H1 (cell line): ENCODE measurements at regions of chr6 and their contacts with region 1.

Region 1: GRCh38 chr6:158686791-158687381 is 37.0 kb downstream of the SYTL3 start:
- DNase-seq: no peak
- H3K4me3 ChIP-seq: no peak overlapping the region
- H3K27ac ChIP-seq: no peak overlapping the region
- H3K4me1 ChIP-seq: no peaks in the 10 kb centered on the region
- H3K27me3 ChIP-seq: no peaks in the 10 kb centered on the region
- CTCF ChIP-seq: no peak
- EP300 ChIP-seq: no peak
- POLR2A ChIP-seq: no peak
- RAD21 ChIP-seq: no peak

Region 2: GRCh38 chr6:158213925-158214674 is 472.8 kb before region 1 on chr6:
- CTCF ChIA-PET with region 1: interaction called, 10 read pairs
- POLR2A ChIA-PET with region 1: no interaction called
- DNase-seq: no peak
- H3K4me3 ChIP-seq: no peak overlapping the region
- H3K27ac ChIP-seq: no peak overlapping the region
- H3K4me1 ChIP-seq: no peaks in the 10 kb centered on the region
- H3K27me3 ChIP-seq: no peaks in the 10 kb centered on the region
- CTCF ChIP-seq: peak; percentile 38 to 86 (median 79)
- EP300 ChIP-seq: no peak
- POLR2A ChIP-seq: no peak
- RAD21 ChIP-seq: peak; percentile 93 to 94

Region 3: DNA sequence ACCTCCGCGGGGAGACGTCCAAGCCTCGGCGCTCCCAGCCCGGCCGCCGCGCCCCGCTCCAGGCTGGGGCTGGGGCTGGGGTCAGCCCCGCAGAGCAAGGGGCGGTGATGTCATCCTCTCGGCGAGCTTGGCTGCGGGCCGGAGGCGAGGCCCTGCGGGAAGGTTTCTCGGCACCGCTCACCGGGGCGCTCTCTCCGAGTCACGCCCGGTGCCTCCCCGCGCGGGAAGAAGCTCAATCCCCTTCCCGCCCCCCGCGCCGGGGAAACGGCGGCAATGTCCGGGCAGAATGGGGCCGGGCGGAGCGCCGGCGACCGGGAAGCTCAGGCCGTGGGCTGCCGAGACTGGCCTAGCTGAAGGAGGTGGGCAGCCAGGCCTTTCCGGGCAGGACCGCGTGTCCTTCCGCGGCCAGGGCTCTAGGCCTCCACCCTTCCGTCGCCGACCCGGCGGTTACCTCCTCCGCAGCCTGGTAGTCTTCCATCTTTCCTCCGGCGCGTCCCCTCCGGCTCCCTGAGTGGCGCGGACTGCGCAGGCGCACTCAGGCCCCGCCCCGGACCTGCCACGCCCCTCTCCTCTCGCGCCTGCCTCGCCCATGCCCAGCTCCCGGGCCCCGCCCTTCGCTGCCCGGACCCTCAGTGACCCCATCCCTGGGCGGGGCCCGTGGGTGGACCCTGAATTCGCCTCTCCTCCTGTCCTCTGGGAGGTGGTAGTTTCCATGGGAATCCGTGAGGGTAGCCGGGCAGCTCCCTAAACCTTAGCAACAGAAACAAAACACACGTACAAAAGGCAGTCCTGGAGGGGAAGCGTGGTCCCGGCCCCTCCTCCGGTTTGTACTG is 42.4 kb before region 1 on chr6 and contains the start of gene DYNLT1:
- CTCF ChIA-PET with region 1: interaction called, 30 read pairs
- POLR2A ChIA-PET with region 1: interaction called, 7 read pairs
- DNase-seq: peak; percentile 80 to 99
- H3K4me3 ChIP-seq: peak within 1 kb of the TSS; percentile 91 to 97 (median 95)
- H3K27ac ChIP-seq: peak within 1 kb of the TSS; percentile 91
- H3K4me1 ChIP-seq: peaks cover 0 to 7% (median 3%) of the 10 kb centered on the region in 4 experiments; a peak in 2 of 7 replicates
- H3K27me3 ChIP-seq: peaks cover 0 to 4% (median 0%) of the 10 kb centered on the region in 4 experiments; a peak in 2 of 7 replicates
- CTCF ChIP-seq: 0 out of 4 replicates have a peak, but pooled peaks of 1 of the 3 experiments have one; percentile 3
- EP300 ChIP-seq: no peak
- POLR2A ChIP-seq: peak; percentile 94 to 95
- RAD21 ChIP-seq: no peak; a peak in 1 of 4 replicates
- total RNA-seq, gene DYNLT1: 109 and 119 TPM in 2 replicates

Region 4: DNA sequence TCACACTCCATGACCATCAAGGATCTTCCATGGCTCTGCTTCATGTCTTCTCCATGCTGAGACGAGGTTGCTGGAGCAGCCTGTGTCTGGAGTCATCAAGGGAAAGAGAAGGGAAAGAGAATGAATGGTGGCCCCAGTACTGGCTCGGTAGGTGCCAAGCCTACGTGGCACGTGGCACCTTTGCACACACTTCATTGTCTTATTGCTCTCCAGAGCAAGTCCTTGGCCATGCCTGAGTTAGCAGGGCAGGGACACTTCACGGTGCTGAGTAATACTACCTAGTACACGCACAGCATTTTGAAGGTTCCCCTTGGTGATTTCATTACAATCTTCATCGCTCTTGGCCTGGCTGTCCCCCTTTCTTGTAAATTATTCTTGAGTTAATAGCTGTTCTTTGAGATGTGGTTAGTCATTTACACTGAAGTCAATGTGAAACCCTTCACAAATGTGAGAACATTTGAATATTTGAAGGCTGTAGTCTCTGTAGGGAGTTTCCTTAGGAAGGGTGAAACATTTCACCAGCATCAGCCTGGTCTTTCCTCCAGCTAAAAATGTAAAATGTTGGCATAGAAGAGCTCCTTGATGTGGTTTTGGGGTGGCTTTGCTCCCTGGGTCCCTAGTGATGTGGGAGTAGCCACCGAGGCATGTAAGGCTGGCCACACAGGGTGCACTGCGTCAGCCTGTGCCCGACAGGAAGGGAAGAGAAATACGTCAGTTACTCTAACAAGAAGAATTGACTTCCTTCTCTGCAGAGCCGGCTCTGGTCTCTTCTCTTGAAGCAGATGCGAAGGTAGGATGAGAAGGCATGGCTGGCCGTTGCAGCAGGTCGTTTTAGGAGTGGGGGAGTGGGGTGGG is 37.4 kb before region 1 on chr6 and contains the start of gene SYTL3:
- CTCF ChIA-PET with region 1: interaction called, 30 read pairs
- POLR2A ChIA-PET with region 1: interaction called, 7 read pairs
- DNase-seq: no peak
- H3K4me3 ChIP-seq: no peak within 1 kb of the TSS
- H3K27ac ChIP-seq: no peak within 1 kb of the TSS
- H3K4me1 ChIP-seq: peaks cover 0 to 4% (median 1%) of the 10 kb centered on the region in 4 experiments; a peak in 1 of 7 replicates
- H3K27me3 ChIP-seq: peaks cover 0 to 4% (median 0%) of the 10 kb centered on the region in 4 experiments; a peak in 2 of 7 replicates
- CTCF ChIP-seq: no peak
- EP300 ChIP-seq: no peak
- POLR2A ChIP-seq: no peak
- RAD21 ChIP-seq: no peak
- total RNA-seq, gene SYTL3: 0.42 and 0.99 TPM in 2 replicates

Region 5: DNA sequence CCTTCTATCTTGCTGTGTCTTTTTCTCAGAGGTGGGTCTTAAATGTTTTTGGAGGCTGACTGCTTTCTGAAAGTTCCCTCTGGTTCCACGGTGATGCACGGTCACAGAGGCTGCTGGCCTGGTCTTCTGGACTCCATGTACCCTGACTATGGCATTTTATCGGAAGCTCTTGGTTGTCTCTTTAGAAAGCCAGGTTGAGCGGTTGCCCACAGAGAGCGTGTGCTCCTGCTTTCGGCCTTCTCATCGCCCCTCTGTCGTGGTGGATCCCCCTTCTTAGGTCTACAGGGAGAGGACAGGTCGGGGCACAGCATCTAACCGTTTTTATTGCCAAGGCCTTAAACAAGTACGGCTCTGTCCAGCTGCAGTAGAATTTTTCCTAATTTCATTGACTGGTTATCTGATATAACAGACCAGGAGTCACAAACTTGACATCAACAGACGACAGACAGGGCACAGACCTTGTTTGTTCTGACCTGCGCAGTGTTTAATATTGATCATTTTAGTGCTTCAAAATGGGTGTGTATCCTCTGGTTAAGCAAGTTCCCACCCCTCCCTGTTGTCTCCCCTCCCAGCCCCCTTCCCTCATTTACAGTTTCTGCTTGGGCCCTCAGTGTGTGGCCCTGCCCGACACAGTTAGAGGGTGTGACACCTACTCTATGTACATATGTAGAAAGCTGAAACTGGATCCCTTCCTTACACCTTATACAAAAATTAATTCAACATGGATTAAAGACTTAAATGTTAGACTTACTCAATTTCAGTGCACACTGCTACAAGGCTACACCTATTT is 12.3 kb before region 1 on chr6:
- CTCF ChIA-PET with region 1: interaction called, 21 read pairs
- POLR2A ChIA-PET with region 1: no interaction called
- DNase-seq: no peak
- H3K4me3 ChIP-seq: no peak overlapping the region
- H3K27ac ChIP-seq: no peak overlapping the region
- H3K4me1 ChIP-seq: no peaks in the 10 kb centered on the region
- H3K27me3 ChIP-seq: no peaks in the 10 kb centered on the region
- CTCF ChIP-seq: no peak
- EP300 ChIP-seq: no peak
- POLR2A ChIP-seq: no peak
- RAD21 ChIP-seq: no peak

Region 6: DNA sequence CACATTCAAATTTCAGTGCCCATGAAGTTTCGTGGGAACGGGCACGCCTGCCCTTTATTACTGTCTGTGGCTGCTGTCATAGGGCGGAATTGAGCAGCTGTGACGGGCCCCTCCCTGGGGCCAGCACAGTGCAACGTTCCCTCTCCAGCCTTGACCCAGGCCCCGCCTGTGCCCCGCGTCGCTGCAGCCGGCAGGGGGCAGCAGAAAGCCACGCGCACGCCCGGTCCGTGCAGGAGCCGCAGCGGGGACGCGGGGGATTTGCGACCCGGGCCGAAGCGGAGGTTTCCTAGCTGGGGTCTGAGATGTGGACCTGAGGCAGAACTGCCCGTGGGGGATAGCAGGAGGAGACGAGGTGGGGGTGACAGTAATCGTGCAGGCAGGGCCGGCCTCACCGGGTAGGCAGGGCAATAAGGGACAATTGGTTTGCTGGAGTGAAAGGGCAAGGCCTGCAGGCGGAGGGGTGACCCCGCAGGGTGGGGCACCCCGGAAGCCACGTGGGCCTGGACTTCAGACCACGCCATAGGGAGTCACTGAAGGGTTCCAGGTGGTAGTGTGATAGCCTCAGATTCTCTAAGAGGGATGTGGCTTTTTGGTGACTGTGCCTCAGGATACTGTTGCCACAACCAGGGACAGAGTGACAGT is 17.4 kb after region 1 on chr6:
- CTCF ChIA-PET with region 1: interaction called, 27 read pairs
- POLR2A ChIA-PET with region 1: no interaction called
- DNase-seq: peak; percentile 41 to 97
- H3K4me3 ChIP-seq: peak overlapping the region in 3 of 4 experiments; percentile 4 to 46 (median 19); a peak in 3 of 8 replicates
- H3K27ac ChIP-seq: no peak overlapping the region
- H3K4me1 ChIP-seq: peaks cover 0 to 4% (median 1%) of the 10 kb centered on the region in 4 experiments; a peak in 1 of 7 replicates
- H3K27me3 ChIP-seq: no peaks in the 10 kb centered on the region
- CTCF ChIP-seq: peak; percentile 93 to 94 (median 94)
- EP300 ChIP-seq: no peak
- POLR2A ChIP-seq: no peak
- RAD21 ChIP-seq: peak; percentile 95

Region 7: DNA sequence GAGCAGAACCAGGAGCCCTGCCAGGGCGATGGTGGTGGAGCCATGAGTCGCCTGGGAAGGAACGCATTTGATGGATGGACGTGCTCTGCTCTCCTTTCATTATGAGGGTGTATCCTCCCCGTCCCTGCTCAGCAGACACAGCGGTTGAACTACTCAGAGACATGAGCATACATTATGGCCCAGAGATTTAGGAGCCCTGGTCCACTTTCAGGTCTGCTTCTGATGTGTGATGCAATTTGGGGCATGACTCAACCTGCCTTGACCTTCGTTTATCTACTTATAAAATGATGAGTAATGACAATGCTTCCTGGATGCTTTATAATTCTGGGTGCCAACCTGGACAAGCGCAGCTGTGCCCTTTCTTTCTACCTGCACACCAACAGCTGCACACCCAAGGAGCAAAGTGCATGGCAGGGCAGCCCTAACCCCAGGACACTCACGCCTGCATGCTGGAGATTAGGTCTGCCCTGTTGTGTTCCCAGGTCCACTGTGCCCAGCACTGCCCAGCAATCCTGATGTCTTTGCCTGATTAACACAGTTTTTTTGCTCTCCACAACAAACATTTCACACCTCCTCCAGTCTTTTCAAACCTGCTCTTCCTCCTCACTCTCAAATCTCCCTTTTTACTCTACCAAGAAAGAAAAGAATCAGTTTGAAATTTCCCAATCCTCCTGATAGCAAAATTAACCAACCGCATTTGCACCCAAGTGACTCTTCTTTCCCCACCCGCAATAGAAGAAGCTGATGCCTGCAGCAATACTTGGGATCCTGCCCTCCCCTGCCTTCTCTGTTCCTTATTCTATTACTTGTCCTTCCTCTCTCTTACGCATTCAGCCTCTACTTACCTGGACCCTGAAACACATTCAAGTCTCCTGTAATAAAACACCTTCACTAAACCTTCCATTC is 51.1 kb after region 1 on chr6:
- CTCF ChIA-PET with region 1: no interaction called
- POLR2A ChIA-PET with region 1: no interaction called
- DNase-seq: no peak
- H3K4me3 ChIP-seq: no peak overlapping the region
- H3K27ac ChIP-seq: no peak overlapping the region
- H3K4me1 ChIP-seq: no peaks in the 10 kb centered on the region
- H3K27me3 ChIP-seq: no peaks in the 10 kb centered on the region
- CTCF ChIP-seq: no peak
- EP300 ChIP-seq: no peak
- POLR2A ChIP-seq: no peak
- RAD21 ChIP-seq: no peak

Region 8: DNA sequence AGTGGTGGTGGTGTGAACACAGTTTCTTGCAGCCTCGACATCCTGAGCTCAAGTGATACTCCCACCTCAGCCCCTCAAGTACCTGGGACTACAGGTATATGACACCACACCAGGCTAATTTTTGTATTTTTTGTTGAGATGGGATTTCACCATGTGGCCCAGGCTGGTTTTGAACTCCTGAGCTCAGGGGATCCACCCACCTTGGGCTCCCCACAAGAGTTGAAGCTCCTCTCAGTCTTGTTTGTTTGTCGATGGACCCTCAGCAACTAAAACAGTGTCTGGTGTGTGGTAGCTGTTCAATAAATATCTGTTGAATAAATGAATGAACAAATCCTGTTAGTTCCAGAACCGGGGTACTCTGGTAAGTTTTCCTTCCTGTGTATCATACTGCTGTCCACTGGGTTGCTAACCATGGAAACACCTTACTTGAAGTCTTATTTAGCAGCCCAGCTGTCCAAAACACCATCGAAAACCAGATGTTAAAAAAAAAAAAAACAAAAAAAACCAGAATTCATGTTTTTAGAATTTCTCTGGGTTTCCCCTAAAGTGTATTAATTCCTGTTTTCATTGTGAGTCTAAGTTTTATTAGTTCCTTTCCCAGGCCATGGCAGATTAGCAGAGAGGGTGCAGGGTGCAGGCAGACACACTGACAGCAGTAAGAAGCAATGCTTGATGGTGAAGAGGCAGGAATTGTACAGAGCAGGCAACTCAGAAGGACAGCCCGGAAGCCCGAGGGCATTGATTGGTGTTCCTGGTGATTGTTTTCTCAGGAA is 140.1 kb after region 1 on chr6:
- CTCF ChIA-PET with region 1: no interaction called
- POLR2A ChIA-PET with region 1: no interaction called
- DNase-seq: no peak
- H3K4me3 ChIP-seq: no peak overlapping the region
- H3K27ac ChIP-seq: no peak overlapping the region
- H3K4me1 ChIP-seq: peaks cover 0 to 8% (median 5%) of the 10 kb centered on the region in 4 experiments; a peak in 4 of 7 replicates
- H3K27me3 ChIP-seq: no peaks in the 10 kb centered on the region
- CTCF ChIP-seq: no peak
- EP300 ChIP-seq: no peak
- POLR2A ChIP-seq: no peak
- RAD21 ChIP-seq: no peak

Region 9: DNA sequence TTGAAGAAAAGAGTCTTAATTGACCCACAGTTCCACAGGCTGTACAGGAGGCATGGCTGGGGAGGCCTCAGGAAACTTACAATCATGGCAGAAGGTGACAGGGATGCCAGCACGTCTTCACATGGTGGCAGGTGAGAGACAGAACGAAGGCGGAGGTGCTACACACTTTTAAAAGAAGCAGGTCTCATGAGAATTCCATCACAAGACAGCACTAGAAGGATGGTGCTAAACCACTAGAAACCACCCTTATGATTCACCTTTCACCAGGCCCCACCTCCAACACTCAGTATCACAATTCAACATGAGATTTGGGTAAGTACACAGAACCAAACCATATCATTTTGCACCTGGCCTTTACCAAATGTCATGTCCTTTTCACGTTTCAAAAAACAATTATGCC is 337.0 kb after region 1 on chr6:
- CTCF ChIA-PET with region 1: no interaction called
- POLR2A ChIA-PET with region 1: no interaction called
- DNase-seq: no peak
- H3K4me3 ChIP-seq: no peak overlapping the region
- H3K27ac ChIP-seq: no peak overlapping the region
- H3K4me1 ChIP-seq: no peaks in the 10 kb centered on the region
- H3K27me3 ChIP-seq: no peaks in the 10 kb centered on the region
- CTCF ChIP-seq: no peak
- EP300 ChIP-seq: no peak
- POLR2A ChIP-seq: no peak
- RAD21 ChIP-seq: no peak